HepG2 (cell line): ENCODE measurements at regions of chr16 and their contacts with region 1.

Region 1: GRCh38 chr16:50326949-50327402 is 41.8 kb downstream of the BRD7 start:
- DNase-seq: no peak
- ATAC-seq: peak; percentile 77
- H3K4me3 ChIP-seq: no peak overlapping the region
- H3K27ac ChIP-seq: no peak overlapping the region
- H3K4me1 ChIP-seq: peaks cover 16% of the 10 kb centered on the region
- H3K27me3 ChIP-seq: no peaks in the 10 kb centered on the region
- CTCF ChIP-seq: peak; percentile 62
- EP300 ChIP-seq: no peak
- POLR2A ChIP-seq: no peak
- RAD21 ChIP-seq: no peak; the same call in 1 of the 2 replicates

Region 2: GRCh38 chr16:50185005-50185505 is 141.9 kb before region 1 on chr16:
- CTCF ChIA-PET with region 1: no interaction called
- POLR2A ChIA-PET with region 1: no interaction called
- in situ Hi-C with region 1: no loop called
- intact Hi-C with region 1: no loop called
- DNase-seq: peak; percentile 87
- ATAC-seq: peak; percentile 88
- H3K4me3 ChIP-seq: no peak overlapping the region
- H3K27ac ChIP-seq: peak overlapping the region; percentile 54
- H3K4me1 ChIP-seq: peaks cover 33% of the 10 kb centered on the region
- H3K27me3 ChIP-seq: no peaks in the 10 kb centered on the region
- CTCF ChIP-seq: no peak
- EP300 ChIP-seq: no peak
- POLR2A ChIP-seq: no peak
- RAD21 ChIP-seq: no peak

Region 3: DNA sequence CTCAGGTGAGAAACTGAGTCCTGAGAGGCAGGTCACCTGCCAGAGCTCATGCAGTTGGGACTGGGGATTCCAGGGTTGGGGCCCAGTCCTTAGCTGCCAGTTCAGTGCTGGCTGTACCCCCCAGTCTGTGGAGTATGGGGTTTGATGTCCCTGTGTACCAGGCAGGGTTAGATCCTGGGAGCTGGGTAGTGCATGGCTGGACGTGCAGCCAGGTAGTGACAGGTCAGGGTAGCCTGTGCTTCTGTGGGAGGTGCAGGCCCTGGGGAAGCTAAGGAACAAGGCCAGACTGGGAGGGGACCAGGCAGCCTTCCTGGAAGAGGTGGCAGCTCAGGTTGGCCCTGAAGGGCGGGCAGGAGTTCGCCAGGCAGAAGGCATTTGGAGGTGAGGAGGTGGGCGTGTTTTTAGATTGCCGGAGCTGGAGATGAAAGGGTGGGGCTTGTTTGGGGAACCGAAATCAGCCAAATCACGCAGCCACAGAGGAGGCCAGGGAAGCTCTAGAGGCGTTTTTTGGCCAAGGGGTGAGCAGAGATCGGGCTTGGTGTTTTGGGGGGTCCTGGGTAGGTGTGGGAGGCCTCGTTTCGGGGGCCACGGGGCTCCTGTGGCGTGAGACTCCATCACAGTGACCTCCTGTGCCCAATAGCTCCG is 53.2 kb before region 1 on chr16:
- CTCF ChIA-PET with region 1: no interaction called
- POLR2A ChIA-PET with region 1: no interaction called
- in situ Hi-C with region 1: loop called (anchors 5 kb)
- intact Hi-C with region 1: no loop called
- DNase-seq: no peak
- ATAC-seq: no peak
- H3K4me3 ChIP-seq: no peak overlapping the region
- H3K27ac ChIP-seq: no peak overlapping the region
- H3K4me1 ChIP-seq: peaks cover 21% of the 10 kb centered on the region
- H3K27me3 ChIP-seq: peaks cover 2 to 26% of the 10 kb centered on the region in 2 experiments; a peak in 3 of 5 replicates
- CTCF ChIP-seq: no peak
- EP300 ChIP-seq: no peak
- POLR2A ChIP-seq: no peak
- RAD21 ChIP-seq: no peak

Region 4: DNA sequence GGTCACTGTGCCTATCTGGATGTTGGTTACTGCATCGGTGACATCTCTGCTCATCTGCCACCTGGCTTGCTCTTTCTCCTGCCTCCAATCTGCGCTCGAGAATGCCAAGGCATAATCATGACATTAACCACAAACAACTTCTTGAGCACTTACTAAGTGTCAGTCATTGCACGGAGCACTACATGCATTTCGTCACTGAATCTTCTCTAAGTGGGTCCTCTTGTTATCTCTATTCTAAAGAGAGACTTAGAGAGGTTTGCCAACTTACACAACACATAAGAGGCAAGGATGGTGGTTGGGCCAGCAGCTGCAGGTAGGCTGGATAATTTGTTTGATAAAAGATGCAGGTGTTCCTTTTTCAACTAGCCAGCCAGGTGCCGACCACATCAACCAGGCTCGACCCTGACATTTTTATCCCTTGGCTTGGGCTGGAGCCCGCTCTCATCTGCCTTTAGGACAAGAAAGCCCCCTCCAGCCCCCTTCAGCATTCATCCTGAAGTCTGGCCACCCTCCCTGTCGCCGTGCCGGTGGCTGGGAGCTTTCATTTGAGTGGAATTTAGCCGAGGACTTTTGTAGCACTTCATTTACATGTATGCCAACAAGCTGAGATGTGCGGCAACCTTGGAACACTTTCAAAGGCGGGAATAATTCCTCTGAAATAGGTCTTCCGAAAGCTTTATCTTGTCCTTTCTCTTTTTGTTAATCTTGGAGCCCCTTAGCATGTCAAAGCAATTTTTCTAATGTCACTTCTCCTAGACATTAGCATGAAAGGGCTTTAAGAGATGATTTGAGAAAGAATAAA is 131.9 kb after region 1 on chr16:
- CTCF ChIA-PET with region 1: no interaction called
- POLR2A ChIA-PET with region 1: no interaction called
- in situ Hi-C with region 1: no loop called
- intact Hi-C with region 1: no loop called
- DNase-seq: no peak
- ATAC-seq: no peak
- H3K4me3 ChIP-seq: no peak overlapping the region
- H3K27ac ChIP-seq: no peak overlapping the region
- H3K4me1 ChIP-seq: peaks cover 61% of the 10 kb centered on the region
- H3K27me3 ChIP-seq: no peaks in the 10 kb centered on the region
- CTCF ChIP-seq: no peak
- EP300 ChIP-seq: no peak
- POLR2A ChIP-seq: no peak
- RAD21 ChIP-seq: no peak